ENCODE measurements at regions of chr17 and their contacts with region 1.

Region 1: GRCh38 chr17:40219073-40219860 is at the start of gene WIPF2:
- DNase-seq: peak; percentile 99
- H3K4me3 ChIP-seq: peak within 1 kb of the TSS; percentile 66 to 89 (median 72)
- H3K27ac ChIP-seq: peak within 1 kb of the TSS; percentile 92 to 93 (median 92)
- H3K4me1 ChIP-seq: peaks cover 0 to 19% (median 15%) of the 10 kb centered on the region in 4 donors
- H3K27me3 ChIP-seq: no peaks in the 10 kb centered on the region
- CTCF ChIP-seq: peak; percentile 34 to 82 (median 72)
- EP300 ChIP-seq: no peak
- POLR2A ChIP-seq: peak; percentile 54 to 60
- total RNA-seq, gene WIPF2: 6.7 to 10.2 (median 8.7) TPM

Region 2: DNA sequence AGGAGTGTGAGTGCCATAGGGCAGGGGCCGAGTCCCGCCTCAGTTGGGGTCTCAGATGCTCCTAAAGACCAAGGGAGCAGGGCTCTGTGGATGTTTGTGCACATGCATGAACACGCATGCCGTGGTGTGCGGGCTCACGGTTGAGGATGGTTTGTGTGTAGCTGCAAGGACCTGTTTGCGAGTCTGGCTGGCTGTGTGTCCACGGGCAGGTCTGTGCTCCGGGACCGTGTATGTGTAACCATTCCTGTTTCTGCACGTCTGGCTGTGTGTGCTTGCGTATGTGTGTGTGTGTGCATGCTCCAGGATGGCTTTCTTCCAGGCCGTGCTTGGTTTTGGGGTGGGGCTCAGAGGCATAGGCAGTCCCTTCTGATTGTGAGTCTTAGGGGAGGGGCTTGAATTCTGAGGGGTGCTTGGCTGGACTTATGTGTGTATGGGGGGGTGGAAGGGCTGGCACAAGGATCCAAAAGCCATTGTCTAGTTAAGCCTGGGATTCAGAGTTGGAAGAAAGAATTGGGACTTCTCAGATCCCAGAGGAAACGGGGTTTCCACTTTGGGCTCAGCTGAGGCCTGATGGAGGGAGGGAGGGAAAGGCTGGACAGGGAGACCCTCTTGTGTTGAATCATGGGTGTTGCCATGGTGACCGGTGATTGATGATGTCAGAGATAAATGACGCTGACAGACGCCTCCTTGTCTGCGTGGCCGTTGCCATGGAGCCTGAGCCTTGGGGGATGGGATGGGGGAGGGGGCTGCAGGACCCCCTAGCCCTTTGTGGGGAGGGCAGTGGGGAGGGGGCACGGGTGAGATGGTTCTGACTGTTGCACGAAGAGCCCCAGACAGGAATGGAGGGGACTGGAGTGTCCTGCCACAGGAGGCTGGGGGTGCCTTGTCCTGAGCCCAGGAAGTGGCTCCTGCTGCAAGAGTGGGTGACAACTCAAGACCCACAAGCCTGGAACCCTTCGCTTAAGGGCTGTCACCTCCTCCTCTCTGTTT is 130.9 kb after region 1 on chr17:
- intact Hi-C with region 1: loop called (anchors 5 kb)
- DNase-seq: no peak
- H3K4me3 ChIP-seq: no peak overlapping the region
- H3K27ac ChIP-seq: peak overlapping the region; percentile 94 to 99 (median 96)
- H3K4me1 ChIP-seq: peaks cover 0 to 80% (median 78%) of the 10 kb centered on the region in 4 donors
- H3K27me3 ChIP-seq: no peaks in the 10 kb centered on the region
- CTCF ChIP-seq: no peak
- EP300 ChIP-seq: no peak
- POLR2A ChIP-seq: no peak